ENCODE measurements at regions of chr15 and their contacts with region 1.

Region 1: DNA sequence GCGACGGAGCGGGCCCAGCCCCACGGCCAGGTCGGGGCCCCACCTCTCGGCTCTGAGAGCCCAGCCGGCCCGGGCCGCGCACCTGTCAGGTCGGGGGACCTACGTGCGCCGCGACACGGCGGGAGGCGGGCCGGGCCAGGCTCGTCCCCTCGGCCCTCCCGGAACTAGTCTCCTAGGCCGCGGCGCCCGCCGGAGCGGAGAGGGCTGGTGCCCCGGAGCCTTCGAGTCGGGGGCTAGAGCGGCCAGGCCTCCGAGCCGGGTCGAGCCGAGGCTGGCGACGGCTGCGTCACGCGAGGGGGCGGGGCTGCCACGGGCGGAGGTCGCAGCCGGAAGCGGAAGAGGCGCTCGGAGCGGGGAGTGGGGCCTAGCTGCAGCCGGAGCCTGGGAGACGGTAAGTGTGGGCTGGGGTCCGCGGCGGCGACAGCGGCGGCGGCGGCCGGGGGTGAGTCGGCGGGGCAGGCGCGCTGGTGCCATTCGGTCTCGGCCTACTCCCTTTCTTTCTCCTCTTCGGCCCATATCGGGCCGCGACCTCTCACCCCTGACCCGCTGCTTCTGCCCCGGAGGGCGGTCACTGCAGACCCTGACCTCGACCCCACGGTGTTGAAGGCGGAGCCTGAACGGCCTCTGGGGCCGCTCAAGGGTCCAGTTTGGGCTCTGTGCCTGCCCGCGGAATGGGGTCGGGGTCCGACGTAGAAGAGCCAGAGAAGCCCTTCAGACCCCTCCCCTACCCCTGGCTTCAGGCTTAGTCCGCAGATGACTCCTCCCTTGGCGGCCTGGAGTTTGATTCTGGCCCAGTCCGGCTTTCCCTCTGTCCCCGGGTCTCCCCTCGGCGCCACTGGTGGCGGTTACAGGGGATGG is at the start of gene CLK3:
- DNase-seq: peak; percentile 95 to 97 (median 96)
- H3K4me3 ChIP-seq: peak within 1 kb of the TSS; percentile 98 to 100
- H3K4me3 Mint-ChIP-seq: peak within 1 kb of the TSS; percentile 92 to 98 (median 94)
- H3K27ac ChIP-seq: peak within 1 kb of the TSS; percentile 99
- H3K27ac Mint-ChIP-seq: peak within 1 kb of the TSS; percentile 98 to 99 (median 98)
- H3K4me1 ChIP-seq: peaks cover 44% of the 10 kb centered on the region
- H3K4me1 Mint-ChIP-seq: peaks cover 28 to 59% (median 31%) of the 10 kb centered on the region in 4 donors
- H3K27me3 ChIP-seq: no peaks in the 10 kb centered on the region
- H3K27me3 Mint-ChIP-seq: no peaks in the 10 kb centered on the region
- total RNA-seq, gene CLK3: 163 to 167 TPM

Region 2: DNA sequence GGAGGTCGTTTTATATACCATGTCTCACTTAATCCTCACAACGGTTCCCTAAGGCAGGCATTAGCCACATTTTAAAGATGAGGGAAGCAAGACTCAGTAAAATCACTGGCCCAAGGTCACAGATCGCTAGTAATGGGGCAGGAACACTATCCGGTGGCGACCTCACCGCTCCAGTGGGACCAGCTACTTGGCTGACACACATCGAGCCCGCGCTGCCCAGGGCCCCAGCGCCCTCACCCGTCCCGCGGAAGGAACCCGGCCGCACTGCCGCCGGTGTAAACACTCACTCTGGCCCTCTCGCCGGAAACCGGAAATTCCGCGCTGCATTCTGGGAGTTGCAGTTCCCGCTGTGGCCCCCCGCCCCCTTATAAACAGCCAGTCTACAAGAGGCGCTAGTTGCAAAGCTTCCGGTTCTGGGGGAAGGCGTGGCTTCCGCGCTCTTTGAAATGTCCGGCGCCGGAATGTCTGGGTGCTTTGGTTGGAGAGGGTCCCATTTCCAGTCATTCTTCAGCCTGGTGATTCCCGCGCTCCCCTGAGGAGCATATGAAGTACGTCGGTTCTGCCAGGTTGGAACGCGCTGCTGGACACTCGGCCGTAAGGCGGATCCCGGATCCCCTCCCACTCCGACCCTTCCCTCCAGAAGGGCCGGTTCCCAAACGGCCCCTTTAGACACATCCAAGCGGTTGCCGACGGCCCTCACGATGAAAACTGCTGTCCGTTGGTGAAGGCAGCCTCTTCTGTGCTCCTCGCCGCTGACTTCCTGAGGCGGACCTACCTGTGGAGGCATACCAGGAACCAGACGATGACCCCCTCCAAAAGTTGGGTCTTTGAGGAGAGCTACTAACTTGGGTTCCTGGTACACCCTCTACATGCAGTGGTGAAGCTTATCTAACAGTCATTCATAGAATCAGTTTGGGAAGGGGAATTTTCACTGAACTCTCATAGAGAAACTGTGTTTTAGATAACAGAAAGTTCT is 154.6 kb before region 1 on chr15 and contains the start of gene UBL7:
- CTCF ChIA-PET with region 1: no interaction called
- POLR2A ChIA-PET with region 1: interaction called, 4 read pairs
- intact Hi-C with region 1: loop called (anchors 1 kb)
- DNase-seq: peak; percentile 89 to 97 (median 91)
- H3K4me3 ChIP-seq: peak within 1 kb of the TSS; percentile 78 to 100
- H3K4me3 Mint-ChIP-seq: peak within 1 kb of the TSS; percentile 88 to 98 (median 94)
- H3K27ac ChIP-seq: peak within 1 kb of the TSS; percentile 84
- H3K27ac Mint-ChIP-seq: peak within 1 kb of the TSS; percentile 66 to 96 (median 92)
- H3K4me1 ChIP-seq: peaks cover 40% of the 10 kb centered on the region
- H3K4me1 Mint-ChIP-seq: peaks cover 32 to 53% (median 46%) of the 10 kb centered on the region in 4 donors
- H3K27me3 ChIP-seq: no peaks in the 10 kb centered on the region
- H3K27me3 Mint-ChIP-seq: no peaks in the 10 kb centered on the region
- total RNA-seq, gene UBL7: 36.4 to 42.4 TPM

Region 3: GRCh38 chr15:74545880-74546656 is 69.7 kb before region 1 on chr15:
- CTCF ChIA-PET with region 1: interaction called, 9 read pairs
- POLR2A ChIA-PET with region 1: interaction called, 68 read pairs
- intact Hi-C with region 1: loop called (anchors 1 kb)
- DNase-seq: peak; percentile 76 to 93 (median 79)
- H3K4me3 ChIP-seq: no peak overlapping the region
- H3K4me3 Mint-ChIP-seq: peak overlapping the region; percentile 62 to 90 (median 76)
- H3K27ac ChIP-seq: peak overlapping the region; percentile 43
- H3K27ac Mint-ChIP-seq: peak overlapping the region; percentile 79 to 97 (median 85)
- H3K4me1 ChIP-seq: peaks cover 65% of the 10 kb centered on the region
- H3K4me1 Mint-ChIP-seq: peaks cover 52 to 85% (median 69%) of the 10 kb centered on the region in 4 donors
- H3K27me3 ChIP-seq: no peaks in the 10 kb centered on the region
- H3K27me3 Mint-ChIP-seq: peaks cover 0 to 1% of the 10 kb centered on the region in 2 donors

Region 4: DNA sequence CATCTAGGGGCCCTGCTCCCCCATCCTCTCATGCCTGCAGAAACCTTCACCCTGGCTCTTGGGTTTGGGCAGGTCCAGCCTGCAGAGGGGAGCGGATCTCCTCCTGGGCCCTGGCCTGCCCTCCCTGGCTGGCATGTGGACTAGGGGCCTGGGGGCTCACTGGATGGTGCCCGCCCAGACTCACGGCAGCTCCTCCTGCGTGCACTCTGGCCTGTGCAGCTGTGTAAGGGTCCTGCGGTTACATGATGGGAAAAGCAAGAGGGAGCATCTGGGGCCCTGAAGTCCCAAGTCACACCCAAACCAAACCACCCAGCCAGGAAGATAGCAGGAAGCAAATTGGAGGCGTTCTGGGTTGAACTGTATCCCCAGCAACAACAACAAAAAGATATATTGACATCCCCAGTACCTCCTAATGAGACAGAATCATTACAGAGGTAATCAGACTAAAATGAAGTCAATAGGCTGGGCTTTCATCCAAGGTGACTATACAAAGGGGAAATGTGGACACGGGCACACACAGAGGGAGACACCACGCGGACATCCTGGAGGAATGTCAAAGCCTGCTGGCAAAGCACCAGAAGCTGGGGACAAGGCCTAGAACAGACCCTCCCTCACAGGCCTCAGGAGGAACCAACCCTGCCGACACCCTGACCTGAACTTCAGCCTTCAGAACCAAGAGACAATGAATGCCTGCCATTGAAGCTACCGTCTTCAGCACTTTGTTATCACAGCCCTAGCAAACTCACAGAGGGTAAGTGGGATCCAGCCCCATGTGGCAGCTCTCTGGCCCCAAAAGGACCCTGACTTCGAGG is 10.5 kb before region 1 on chr15:
- CTCF ChIA-PET with region 1: interaction called, 5 read pairs
- POLR2A ChIA-PET with region 1: interaction called, 61 read pairs
- intact Hi-C with region 1: no loop called
- DNase-seq: peak in 1 of 5 donors; percentile 19
- H3K4me3 ChIP-seq: no peak overlapping the region
- H3K4me3 Mint-ChIP-seq: no peak overlapping the region
- H3K27ac ChIP-seq: no peak overlapping the region
- H3K27ac Mint-ChIP-seq: peak overlapping the region in 2 of 7 donors; percentile 35 to 36
- H3K4me1 ChIP-seq: no peaks in the 10 kb centered on the region
- H3K4me1 Mint-ChIP-seq: peaks cover 0 to 5% (median 2%) of the 10 kb centered on the region in 4 donors
- H3K27me3 ChIP-seq: no peaks in the 10 kb centered on the region
- H3K27me3 Mint-ChIP-seq: no peaks in the 10 kb centered on the region

Region 5: DNA sequence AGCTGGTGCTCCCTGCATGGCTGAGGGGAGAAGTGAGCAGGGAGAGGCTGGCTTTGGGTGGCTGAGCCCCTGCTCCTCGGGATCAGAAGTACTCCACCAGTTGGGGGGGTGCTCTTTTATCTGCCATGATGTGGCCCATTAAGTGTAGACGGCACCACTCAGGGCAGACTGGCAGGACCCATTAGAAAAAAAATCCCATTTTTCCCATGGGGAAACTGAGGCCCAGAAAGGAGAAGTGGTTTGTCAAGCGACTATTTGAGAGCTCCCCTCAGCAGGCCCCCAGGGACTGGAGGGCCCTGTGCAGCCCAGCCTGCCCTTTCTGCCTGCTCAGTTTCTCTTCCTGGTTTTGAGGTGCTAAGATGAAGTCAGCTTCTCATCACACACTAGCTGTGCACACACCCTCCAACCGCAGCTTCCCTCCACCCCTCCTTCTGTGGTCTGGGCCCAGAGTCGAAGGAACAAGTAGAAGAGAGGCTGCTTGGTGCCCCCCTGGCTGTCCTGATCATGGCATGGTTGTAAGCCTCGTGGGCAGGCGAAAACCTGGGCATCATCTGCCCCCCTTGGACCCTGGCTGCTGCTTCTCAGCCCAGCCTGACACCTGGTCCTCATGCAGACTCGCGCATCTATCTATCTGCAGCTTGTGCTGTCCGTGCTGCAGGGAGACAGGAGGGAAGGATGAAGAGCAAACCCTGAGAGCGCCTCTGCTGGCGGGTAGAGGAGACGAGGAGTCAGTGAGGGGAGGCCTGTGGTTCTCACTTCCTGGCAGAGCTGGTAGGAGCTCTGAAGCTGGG is 171.7 kb after region 1 on chr15:
- CTCF ChIA-PET with region 1: interaction called, 13 read pairs
- POLR2A ChIA-PET with region 1: interaction called, 35 read pairs
- intact Hi-C with region 1: loop called (anchors 5 kb)
- DNase-seq: peak; percentile 94 to 99 (median 96)
- H3K4me3 ChIP-seq: peak overlapping the region; percentile 55 to 69
- H3K4me3 Mint-ChIP-seq: peak overlapping the region; percentile 85 to 96 (median 92)
- H3K27ac ChIP-seq: peak overlapping the region; percentile 86
- H3K27ac Mint-ChIP-seq: peak overlapping the region; percentile 95 to 99 (median 98)
- H3K4me1 ChIP-seq: peaks cover 89% of the 10 kb centered on the region
- H3K4me1 Mint-ChIP-seq: peaks cover 39 to 97% (median 66%) of the 10 kb centered on the region in 4 donors
- H3K27me3 ChIP-seq: no peaks in the 10 kb centered on the region
- H3K27me3 Mint-ChIP-seq: no peaks in the 10 kb centered on the region

Measured in CD4-positive, alpha-beta memory T cell (primary cell).